Calu3 (cell line): ENCODE measurements at regions of chrX and their contacts with region 1.

Region 1: GRCh38 chrX:65480960-65481359 is 53.6 kb downstream of the LAS1L start:
- DNase-seq: no peak
- H3K4me3 Mint-ChIP-seq: no peak overlapping the region
- H3K27ac Mint-ChIP-seq: no peak overlapping the region
- H3K4me1 Mint-ChIP-seq: no peaks in the 10 kb centered on the region
- H3K27me3 Mint-ChIP-seq: no peaks in the 10 kb centered on the region
- CTCF ChIP-seq: no peak

Region 2: GRCh38 chrX:65647801-65648200 is 166.8 kb after region 1 on chrX:
- CTCF ChIA-PET with region 1: interaction called, 10 read pairs
- intact Hi-C with region 1: no loop called
- DNase-seq: no peak
- H3K4me3 Mint-ChIP-seq: no peak overlapping the region
- H3K27ac Mint-ChIP-seq: no peak overlapping the region
- H3K4me1 Mint-ChIP-seq: peaks cover 21% of the 10 kb centered on the region
- H3K27me3 Mint-ChIP-seq: no peaks in the 10 kb centered on the region
- CTCF ChIP-seq: no peak